Activated CD8-positive, alpha-beta T cell treated with anti-CD3 and anti-CD28 coated beads for 36 hours (primary cell): ENCODE measurements at regions of chr1 and their contacts with region 1.

Region 1: GRCh38 chr1:237864338-237865244 is 26.1 kb downstream of the ZP4 start:
- DNase-seq: peak; percentile 33
- ATAC-seq: peak; percentile 45
- H3K4me3 Mint-ChIP-seq: no peak overlapping the region
- H3K27ac Mint-ChIP-seq: no peak overlapping the region
- H3K4me1 Mint-ChIP-seq: no peaks in the 10 kb centered on the region
- H3K27me3 Mint-ChIP-seq: peaks cover 1% of the 10 kb centered on the region
- CTCF ChIP-seq: peak; percentile 66

Region 2: GRCh38 chr1:237799762-237800474 is 64.7 kb before region 1 on chr1:
- CTCF ChIA-PET with region 1: no interaction called
- POLR2A ChIA-PET with region 1: no interaction called
- intact Hi-C with region 1: no loop called
- DNase-seq: peak; percentile 63
- ATAC-seq: peak; percentile 93
- H3K4me3 Mint-ChIP-seq: no peak overlapping the region
- H3K27ac Mint-ChIP-seq: no peak overlapping the region
- H3K4me1 Mint-ChIP-seq: no peaks in the 10 kb centered on the region
- H3K27me3 Mint-ChIP-seq: peaks cover 1% of the 10 kb centered on the region
- CTCF ChIP-seq: peak; percentile 44

Region 3: DNA sequence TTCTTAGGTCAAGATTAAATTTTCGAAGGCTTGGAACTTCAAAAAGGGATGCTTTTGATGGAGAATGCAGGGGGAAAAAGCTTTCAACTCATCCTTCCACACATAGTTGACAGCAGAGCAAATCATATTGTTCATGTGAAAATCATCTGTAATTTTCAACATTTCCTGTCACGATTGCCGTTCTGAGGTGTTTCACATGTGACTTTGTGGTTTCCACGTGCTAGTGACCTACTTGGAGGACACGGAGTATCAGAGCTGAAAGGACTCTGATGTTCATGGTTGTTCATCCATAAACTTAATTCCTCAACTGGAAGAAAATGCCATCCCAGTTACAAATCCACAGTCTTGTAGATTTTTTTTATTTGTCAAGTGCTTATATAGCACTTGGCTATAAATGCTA is 53.0 kb before region 1 on chr1:
- CTCF ChIA-PET with region 1: interaction called, 11 read pairs
- POLR2A ChIA-PET with region 1: no interaction called
- intact Hi-C with region 1: no loop called
- DNase-seq: no peak
- ATAC-seq: no peak
- H3K4me3 Mint-ChIP-seq: no peak overlapping the region
- H3K27ac Mint-ChIP-seq: no peak overlapping the region
- H3K4me1 Mint-ChIP-seq: no peaks in the 10 kb centered on the region
- H3K27me3 Mint-ChIP-seq: peaks cover 5% of the 10 kb centered on the region
- CTCF ChIP-seq: no peak

Region 4: GRCh38 chr1:237851210-237851845 is 13.3 kb before region 1 on chr1:
- CTCF ChIA-PET with region 1: interaction called, 22 read pairs
- POLR2A ChIA-PET with region 1: no interaction called
- intact Hi-C with region 1: no loop called
- DNase-seq: peak; percentile 55
- ATAC-seq: no peak
- H3K4me3 Mint-ChIP-seq: no peak overlapping the region
- H3K27ac Mint-ChIP-seq: no peak overlapping the region
- H3K4me1 Mint-ChIP-seq: no peaks in the 10 kb centered on the region
- H3K27me3 Mint-ChIP-seq: no peaks in the 10 kb centered on the region
- CTCF ChIP-seq: peak; percentile 36